Heart left ventricle (tissue), 16 donors: ENCODE measurements at regions of chr15 and their contacts with region 1.

Region 1: DNA sequence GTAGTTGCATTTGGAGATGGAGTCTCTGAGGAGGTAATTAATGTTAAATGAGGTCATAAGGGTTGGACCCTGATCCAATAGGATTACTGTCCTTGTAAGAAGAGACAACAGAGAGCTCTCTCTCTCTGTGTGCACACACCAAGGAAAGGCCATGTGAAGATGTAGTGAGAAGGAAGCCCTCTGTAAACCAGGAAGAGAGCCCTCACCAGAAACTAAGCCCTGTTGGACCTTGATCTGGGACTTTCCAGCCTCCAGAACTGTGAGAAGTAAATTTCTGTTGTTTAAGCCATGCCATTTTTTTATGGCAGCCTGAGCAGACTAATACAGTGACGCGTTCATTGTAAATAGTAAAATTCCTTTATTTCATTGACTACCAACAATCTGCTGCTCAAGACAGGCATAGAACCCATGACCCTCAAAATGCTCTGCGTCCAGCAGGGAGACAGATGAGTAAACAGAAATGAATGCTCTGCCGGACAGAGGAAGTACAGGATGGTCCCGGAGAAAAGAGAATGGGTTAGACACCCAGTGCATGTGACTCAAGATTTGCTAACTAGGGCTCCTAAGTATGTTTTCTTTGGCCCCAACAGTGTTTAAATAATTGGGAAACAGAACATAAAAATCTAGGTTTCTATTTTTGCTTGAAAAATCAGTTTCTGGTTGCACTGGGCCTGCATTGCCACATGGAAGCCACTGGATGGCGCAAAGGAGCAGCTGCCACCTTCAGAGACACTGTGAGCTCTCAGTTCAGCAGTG is 37.9 kb upstream of the TNFAIP8L3 start:
- DNase-seq: peak in 1 of 5 donors; percentile 40
- ATAC-seq: peak; percentile 53 to 87 (median 78)
- H3K4me3 ChIP-seq: no peak overlapping the region
- H3K27ac ChIP-seq: peak overlapping the region in 2 of 12 donors; percentile 31 to 47
- H3K4me1 ChIP-seq: peaks cover 0 to 17% (median 0%) of the 10 kb centered on the region in 12 donors
- H3K27me3 ChIP-seq: no peaks in the 10 kb centered on the region
- CTCF ChIP-seq: peak; percentile 63 to 88 (median 76)
- POLR2A ChIP-seq: no peak

Region 2: DNA sequence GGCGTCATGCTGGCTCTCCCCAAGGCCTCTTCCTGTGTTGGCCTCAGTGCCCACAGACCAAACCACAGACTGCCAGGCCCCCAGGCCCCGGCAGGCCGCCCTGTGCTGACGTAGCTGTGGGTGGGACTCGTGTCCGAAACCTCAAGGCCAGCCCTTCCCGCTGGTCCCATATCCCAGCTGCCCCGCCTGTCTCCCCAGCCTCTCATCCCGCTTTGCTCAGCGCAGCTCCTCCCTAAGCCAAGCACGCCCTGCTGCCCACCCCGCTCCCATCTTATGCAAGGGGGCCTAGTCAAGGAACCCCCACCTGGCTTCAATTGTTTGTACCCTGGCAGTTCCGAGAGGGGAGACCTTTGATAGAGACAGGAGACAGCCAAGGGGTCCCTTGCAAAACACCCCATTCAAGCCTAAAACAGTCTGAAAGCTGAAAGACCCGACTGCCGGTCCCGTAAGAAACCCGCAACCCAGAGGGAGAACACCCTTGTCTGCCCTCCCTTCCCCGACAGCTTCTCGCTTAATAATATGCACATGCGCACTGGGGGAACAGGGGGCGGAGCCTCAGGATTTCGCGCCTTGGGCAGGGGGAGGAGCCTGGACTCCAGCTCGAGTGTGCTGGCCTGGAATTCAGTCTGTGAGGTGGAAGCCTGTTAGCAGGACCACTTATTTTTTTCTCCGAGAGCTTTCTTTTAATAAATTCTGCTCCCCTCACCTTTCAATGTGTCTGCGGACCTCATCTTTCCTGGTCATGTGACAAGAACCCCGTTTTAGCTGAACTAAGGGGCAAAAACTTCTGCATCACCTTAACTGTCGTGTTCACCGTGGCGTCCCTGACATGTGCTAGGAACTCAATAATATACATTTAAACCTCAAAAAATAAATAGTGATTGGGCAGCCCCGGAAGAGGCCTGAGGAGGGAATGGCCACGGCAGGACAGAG is 55.1 kb before region 1 on chr15:
- intact Hi-C with region 1: loop called in 1 of 10 experiments (anchors 10 kb)
- DNase-seq: peak; percentile 57 to 85 (median 70)
- ATAC-seq: peak in 3 of 4 donors; percentile 49 to 62 (median 59)
- H3K4me3 ChIP-seq: peak overlapping the region in 10 of 12 donors; percentile 10 to 55 (median 37)
- H3K27ac ChIP-seq: peak overlapping the region in 7 of 12 donors; percentile 15 to 67 (median 50)
- H3K4me1 ChIP-seq: peaks cover 0 to 29% (median 19%) of the 10 kb centered on the region in 12 donors
- H3K27me3 ChIP-seq: no peaks in the 10 kb centered on the region
- CTCF ChIP-seq: no peak
- POLR2A ChIP-seq: no peak

Region 3: GRCh38 chr15:51185213-51186159 is 52.9 kb after region 1 on chr15:
- intact Hi-C with region 1: no loop called
- DNase-seq: no peak
- ATAC-seq: no peak
- H3K4me3 ChIP-seq: no peak overlapping the region
- H3K27ac ChIP-seq: peak overlapping the region in 2 of 12 donors; percentile 4 to 15
- H3K4me1 ChIP-seq: peaks cover 0 to 45% (median 15%) of the 10 kb centered on the region in 12 donors
- H3K27me3 ChIP-seq: no peaks in the 10 kb centered on the region
- CTCF ChIP-seq: no peak
- POLR2A ChIP-seq: no peak